ENCODE measurements at regions of chr2 and their contacts with region 1.

Region 1: DNA sequence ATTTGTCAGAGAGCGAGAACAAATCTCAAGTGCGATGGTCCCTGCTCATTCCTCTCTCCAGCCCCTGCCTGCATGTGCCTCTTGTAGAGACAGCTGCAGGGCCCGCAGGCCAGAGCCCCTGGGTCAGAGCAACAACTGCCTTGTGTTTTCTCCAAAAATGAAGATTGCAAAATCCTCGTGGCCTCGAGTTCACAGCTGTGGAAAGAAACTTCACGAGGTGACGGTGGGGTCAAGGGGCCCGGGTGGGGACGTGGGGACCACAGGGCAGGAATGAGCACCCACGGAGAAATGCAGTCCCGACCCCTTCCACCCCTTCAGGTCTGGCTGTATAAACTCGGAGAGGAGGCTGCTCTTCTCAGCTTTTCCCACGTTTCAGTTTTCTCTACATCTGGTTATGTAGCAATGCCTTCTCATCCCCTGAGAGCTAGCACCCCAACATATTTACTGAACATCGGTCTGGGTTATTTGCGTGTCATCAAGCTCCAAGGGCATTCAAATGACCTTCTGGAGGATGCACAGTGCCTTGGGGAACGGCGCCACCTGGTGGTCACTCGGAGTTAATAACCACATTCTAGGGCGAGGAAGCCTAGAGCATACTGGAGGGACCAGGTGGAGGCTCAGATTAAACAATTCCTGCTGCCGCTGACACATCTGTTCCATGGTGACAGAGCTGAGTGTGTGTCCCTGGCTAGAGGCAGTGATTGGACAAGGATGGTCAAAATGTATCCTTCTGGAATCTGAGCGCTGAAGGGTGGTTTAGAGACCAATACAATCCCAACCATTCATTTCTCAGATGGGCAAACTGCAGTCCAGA is 91.4 kb upstream of the CYRIA start:
- DNase-seq: peak; percentile 73
- ATAC-seq: peak; percentile 84
- H3K4me3 Mint-ChIP-seq: no peak overlapping the region
- H3K27ac Mint-ChIP-seq: no peak overlapping the region
- H3K4me1 Mint-ChIP-seq: no peaks in the 10 kb centered on the region
- H3K27me3 Mint-ChIP-seq: no peaks in the 10 kb centered on the region

Region 2: GRCh38 chr2:16617282-16618261 is 139.5 kb before region 1 on chr2:
- CTCF ChIA-PET with region 1: interaction called, 12 read pairs
- POLR2A ChIA-PET with region 1: no interaction called
- DNase-seq: no peak
- ATAC-seq: no peak
- H3K4me3 Mint-ChIP-seq: no peak overlapping the region
- H3K27ac Mint-ChIP-seq: no peak overlapping the region
- H3K4me1 Mint-ChIP-seq: peaks cover 4% of the 10 kb centered on the region
- H3K27me3 Mint-ChIP-seq: peaks cover 8% of the 10 kb centered on the region

Region 3: DNA sequence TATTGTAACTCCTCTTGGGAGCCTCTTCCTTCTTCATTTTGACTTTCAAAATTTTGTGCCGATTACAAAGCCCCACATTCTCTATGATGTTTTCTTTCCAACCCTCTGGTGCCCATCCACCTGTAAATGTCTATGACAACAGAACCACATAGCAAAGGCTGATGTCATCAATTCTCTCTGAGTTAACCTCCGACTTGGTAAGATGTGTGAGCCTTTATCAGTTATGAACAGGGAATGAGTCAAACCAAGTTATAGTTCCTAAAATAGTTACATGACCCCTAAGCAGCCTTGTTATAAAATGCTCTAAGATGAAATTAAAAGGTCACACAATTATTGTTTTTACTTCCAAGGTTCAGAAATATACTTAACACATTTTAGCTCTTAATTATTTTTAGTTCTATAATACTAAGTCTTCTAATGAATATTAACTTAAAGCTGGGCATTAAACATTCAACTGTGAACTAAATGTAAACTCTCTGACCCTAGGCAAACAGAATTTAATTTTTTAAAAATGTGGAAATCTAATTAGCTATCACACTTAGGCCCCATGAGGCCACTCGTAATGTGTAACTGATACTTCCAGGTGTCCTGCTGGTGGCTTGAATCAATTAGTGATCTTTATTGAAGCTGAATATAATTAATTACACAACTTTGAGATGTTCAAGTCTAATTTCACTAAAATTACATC is 10.9 kb after region 1 on chr2:
- CTCF ChIA-PET with region 1: interaction called, 10 read pairs
- POLR2A ChIA-PET with region 1: no interaction called
- DNase-seq: no peak
- ATAC-seq: no peak
- H3K4me3 Mint-ChIP-seq: no peak overlapping the region
- H3K27ac Mint-ChIP-seq: no peak overlapping the region
- H3K4me1 Mint-ChIP-seq: no peaks in the 10 kb centered on the region
- H3K27me3 Mint-ChIP-seq: no peaks in the 10 kb centered on the region

Measured in activated CD8-positive, alpha-beta T cell treated with anti-CD3 and anti-CD28 coated beads, Interleukin-2, amount 10 ng/mL, durations not matched to agents 7 days and 5 days (primary cell).